ENCODE measurements at regions of chr1 and their contacts with region 1.

Region 1: GRCh38 chr1:181105134-181106021 is 16.9 kb downstream of the IER5 start:
- H3K4me3 Mint-ChIP-seq: peak overlapping the region; percentile 78
- H3K27ac Mint-ChIP-seq: peak overlapping the region; percentile 83
- H3K4me1 Mint-ChIP-seq: peaks cover 72% of the 10 kb centered on the region
- H3K27me3 Mint-ChIP-seq: peaks cover 32% of the 10 kb centered on the region

Region 2: GRCh38 chr1:181089677-181090409 is 15.5 kb before region 1 on chr1:
- intact Hi-C with region 1: loop called (anchors 2 kb)
- H3K4me3 Mint-ChIP-seq: peak overlapping the region; percentile 80
- H3K27ac Mint-ChIP-seq: peak overlapping the region; percentile 93
- H3K4me1 Mint-ChIP-seq: peaks cover 70% of the 10 kb centered on the region
- H3K27me3 Mint-ChIP-seq: no peaks in the 10 kb centered on the region

Region 3: DNA sequence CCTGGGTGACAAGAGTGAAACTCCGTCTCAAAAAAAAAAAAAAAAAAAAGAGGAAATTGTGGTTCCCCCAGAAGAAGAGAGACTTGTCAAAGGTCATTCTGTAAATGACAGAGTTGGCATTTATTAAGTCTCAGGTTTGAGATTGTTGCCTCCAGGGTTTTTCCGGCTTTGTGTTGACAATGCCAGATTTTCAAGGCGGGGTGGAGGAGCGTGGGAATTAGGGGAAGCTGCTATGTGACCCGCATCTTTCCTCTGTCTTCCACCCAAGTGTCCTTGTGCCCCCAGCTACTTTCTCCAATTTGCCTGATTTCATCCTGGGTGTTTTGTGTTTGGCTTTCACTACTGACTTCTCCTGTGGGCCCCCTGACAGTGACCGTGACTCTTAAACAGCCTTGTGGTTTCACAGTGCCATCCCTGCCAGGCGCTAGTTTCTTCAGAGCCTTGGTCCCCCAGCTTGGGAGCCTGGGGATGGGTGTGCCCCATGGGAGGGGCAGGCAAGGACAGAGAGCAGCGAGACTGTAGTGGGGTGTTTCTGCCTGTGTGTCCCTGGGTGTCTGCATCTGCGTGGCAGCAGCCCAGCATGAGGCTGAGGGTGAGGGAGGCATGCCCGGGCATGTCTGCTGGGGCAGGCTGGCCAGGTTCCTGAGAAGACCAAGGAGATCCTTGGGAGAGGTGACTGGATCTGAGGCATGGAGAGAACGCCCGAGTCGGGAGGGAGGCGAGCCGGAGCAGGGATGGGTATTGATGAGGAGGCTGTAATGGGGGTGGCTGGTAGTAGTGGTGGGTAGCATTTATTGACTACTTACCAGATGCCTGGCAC is 29.4 kb after region 1 on chr1:
- intact Hi-C with region 1: loop called (anchors 1 kb)
- H3K4me3 Mint-ChIP-seq: peak overlapping the region; percentile 64
- H3K27ac Mint-ChIP-seq: peak overlapping the region; percentile 96
- H3K4me1 Mint-ChIP-seq: peaks cover 92% of the 10 kb centered on the region
- H3K27me3 Mint-ChIP-seq: no peaks in the 10 kb centered on the region

Measured in dendritic cell treated with granulocyte-macrophage colony-stimulating factor and Interleukin-4, amounts not matched to agents 40 ng/mL and 50 ng/mL, for 4 days (primary cell).